GM12878 (cell line): ENCODE measurements at regions of chr9 and their contacts with region 1.

Region 1: GRCh38 chr9:69193685-69194032 is 19.6 kb downstream of the TJP2 start:
- DNase-seq: no peak
- ATAC-seq: no peak
- H3K4me3 ChIP-seq: no peak overlapping the region
- H3K27ac ChIP-seq: no peak overlapping the region
- H3K4me1 ChIP-seq: peaks cover 15% of the 10 kb centered on the region
- H3K27me3 ChIP-seq: no peaks in the 10 kb centered on the region
- CTCF ChIP-seq: peak in 1 of 3 experiments; percentile 37; a peak in 1 of 6 replicates
- EP300 ChIP-seq: no peak
- POLR2A ChIP-seq: no peak
- RAD21 ChIP-seq: peak; percentile 28; the same call in 1 of the 2 replicates

Region 2: GRCh38 chr9:69066955-69067354 is 126.7 kb before region 1 on chr9:
- CTCF ChIA-PET with region 1: interaction called, 20 read pairs
- POLR2A ChIA-PET with region 1: no interaction called
- RAD21 ChIA-PET with region 1: interaction called, 3 read pairs
- SMC1A ChIA-PET with region 1: no interaction called
- in situ Hi-C with region 1: no loop called
- intact Hi-C with region 1: no loop called
- DNase-seq: no peak
- ATAC-seq: no peak
- H3K4me3 ChIP-seq: no peak overlapping the region
- H3K27ac ChIP-seq: no peak overlapping the region
- H3K4me1 ChIP-seq: no peaks in the 10 kb centered on the region
- H3K27me3 ChIP-seq: no peaks in the 10 kb centered on the region
- CTCF ChIP-seq: no peak
- EP300 ChIP-seq: no peak
- POLR2A ChIP-seq: no peak
- RAD21 ChIP-seq: no peak

Region 3: GRCh38 chr9:69155341-69156030 is 38.2 kb before region 1 on chr9:
- CTCF ChIA-PET with region 1: interaction called, 25 read pairs
- POLR2A ChIA-PET with region 1: no interaction called
- RAD21 ChIA-PET with region 1: interaction called, 12 read pairs
- SMC1A ChIA-PET with region 1: interaction called, 20 read pairs
- in situ Hi-C with region 1: no loop called
- intact Hi-C with region 1: no loop called
- DNase-seq: no peak
- ATAC-seq: peak; percentile 99
- H3K4me3 ChIP-seq: 0 out of 2 replicates have a peak overlapping the region, but pooled peaks have one; percentile 24
- H3K27ac ChIP-seq: no peak overlapping the region
- H3K4me1 ChIP-seq: peaks cover 5% of the 10 kb centered on the region; the same call in 1 of the 2 replicates
- H3K27me3 ChIP-seq: no peaks in the 10 kb centered on the region
- CTCF ChIP-seq: no peak
- EP300 ChIP-seq: peak in 1 of 2 experiments; percentile 49; a peak in 1 of 4 replicates
- POLR2A ChIP-seq: no peak
- RAD21 ChIP-seq: no peak

Region 4: GRCh38 chr9:69174616-69175463 is 18.8 kb before region 1 on chr9:
- CTCF ChIA-PET with region 1: interaction called, 134 read pairs
- POLR2A ChIA-PET with region 1: interaction called, 8 read pairs
- RAD21 ChIA-PET with region 1: interaction called, 8 read pairs
- SMC1A ChIA-PET with region 1: interaction called, 45 read pairs
- in situ Hi-C with region 1: no loop called
- intact Hi-C with region 1: loop called (anchors 2 kb)
- DNase-seq: peak; percentile 74
- ATAC-seq: peak; percentile 69
- H3K4me3 ChIP-seq: peak overlapping the region; percentile 80
- H3K27ac ChIP-seq: peak overlapping the region; percentile 82
- H3K4me1 ChIP-seq: peaks cover 13% of the 10 kb centered on the region
- H3K27me3 ChIP-seq: no peaks in the 10 kb centered on the region
- CTCF ChIP-seq: no peak
- EP300 ChIP-seq: peak; percentile 81 to 84
- POLR2A ChIP-seq: no peak; the same call in none of the 2 replicates
- RAD21 ChIP-seq: no peak